Heart right ventricle (tissue), 16 donors: ENCODE measurements at regions of chr1 and their contacts with region 1.

Region 1: DNA sequence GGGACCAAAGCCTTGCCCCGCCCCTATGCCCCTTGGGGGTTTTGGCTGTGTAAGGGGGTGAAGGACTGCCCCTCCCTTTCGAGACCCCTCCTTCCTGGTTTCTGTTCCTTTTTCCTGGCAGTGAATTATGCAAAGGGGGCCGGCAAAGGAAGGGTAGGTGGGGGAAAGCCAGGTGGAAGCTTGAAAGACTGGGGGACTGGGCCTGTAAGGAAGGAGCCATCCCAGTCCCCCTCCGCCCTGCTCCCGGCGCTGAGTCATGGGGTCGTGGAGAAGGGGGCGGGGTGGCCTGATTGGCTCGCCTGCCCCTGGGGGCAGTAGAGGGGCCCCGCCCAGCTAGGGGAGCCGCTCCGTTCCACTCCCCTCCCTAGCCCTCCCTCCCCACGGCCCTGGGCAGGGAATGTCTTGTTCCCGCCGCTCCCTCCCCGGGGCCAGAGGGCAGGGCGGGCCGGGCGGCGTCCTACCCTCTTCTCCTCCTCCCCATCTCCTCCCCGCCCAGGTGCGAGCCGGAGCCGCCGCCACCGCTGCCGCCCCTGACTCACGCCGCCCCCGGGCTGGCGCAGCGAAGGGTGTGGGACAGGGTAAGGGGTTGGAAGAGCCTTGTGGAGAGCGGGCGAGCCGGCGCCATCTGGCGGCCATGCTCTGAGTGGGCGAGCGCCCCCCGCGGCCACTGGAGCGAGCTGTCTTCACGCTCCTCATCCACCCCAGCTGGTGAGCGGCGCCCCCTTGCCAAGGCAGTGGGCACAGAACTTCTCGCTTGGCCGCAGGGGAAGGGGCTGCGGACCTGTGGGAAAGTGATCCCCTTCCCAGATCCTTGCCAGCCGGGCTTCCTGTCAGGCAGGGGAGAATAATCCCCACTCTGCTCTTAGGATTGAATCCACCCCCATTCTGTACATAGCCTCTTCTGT is 14.7 kb downstream of the ZBTB7B start:
- DNase-seq: peak; percentile 88 to 89
- ATAC-seq: peak; percentile 88 to 95 (median 92)
- H3K4me3 ChIP-seq: peak overlapping the region in 9 of 10 donors; percentile 31 to 64 (median 57)
- H3K27ac ChIP-seq: peak overlapping the region; percentile 78 to 91 (median 85)
- H3K4me1 ChIP-seq: peaks cover 12 to 55% (median 27%) of the 10 kb centered on the region in 9 donors
- H3K27me3 ChIP-seq: no peaks in the 10 kb centered on the region
- CTCF ChIP-seq: peak; percentile 97 to 100 (median 98)

Region 2: DNA sequence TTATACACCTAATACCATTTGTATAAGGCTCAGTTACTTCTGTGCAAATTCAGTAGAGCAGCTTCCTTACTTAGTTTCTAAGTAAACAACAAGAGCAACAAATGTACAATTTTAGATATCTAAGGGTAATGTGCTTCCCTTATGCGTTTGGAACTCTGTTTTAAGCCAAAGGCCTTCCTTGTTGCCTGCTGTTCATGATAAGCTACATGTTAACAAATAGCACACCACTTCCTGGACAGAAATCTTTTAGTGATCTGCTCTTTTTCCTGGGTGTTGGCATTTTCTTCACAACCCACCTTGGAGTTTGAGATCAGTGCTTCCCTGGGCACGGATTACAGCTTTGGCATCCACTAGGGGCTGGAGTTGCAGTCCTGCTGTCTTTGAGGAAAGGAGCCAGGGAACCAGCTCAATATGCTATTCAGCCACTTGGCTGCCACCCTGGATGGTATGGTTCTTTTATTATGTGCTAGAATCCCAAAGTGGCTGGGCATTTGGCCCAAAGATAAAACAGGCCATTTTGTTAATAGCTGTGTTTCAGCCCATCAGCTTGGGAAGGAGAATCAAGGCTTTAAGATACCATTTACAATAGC is 353.7 kb before region 1 on chr1:
- intact Hi-C with region 1: no loop called
- DNase-seq: no peak
- ATAC-seq: no peak
- H3K4me3 ChIP-seq: no peak overlapping the region
- H3K27ac ChIP-seq: no peak overlapping the region
- H3K4me1 ChIP-seq: peaks cover 0 to 7% (median 0%) of the 10 kb centered on the region in 9 donors
- H3K27me3 ChIP-seq: peaks cover 0 to 13% (median 3%) of the 10 kb centered on the region in 7 donors
- CTCF ChIP-seq: no peak

Region 3: GRCh38 chr1:154837672-154838171 is 179.6 kb before region 1 on chr1:
- intact Hi-C with region 1: no loop called
- DNase-seq: peak; percentile 67 to 69
- ATAC-seq: peak; percentile 63 to 91 (median 81)
- H3K4me3 ChIP-seq: no peak overlapping the region
- H3K27ac ChIP-seq: peak overlapping the region in 4 of 10 donors; percentile 8 to 49 (median 34)
- H3K4me1 ChIP-seq: peaks cover 20 to 70% (median 34%) of the 10 kb centered on the region in 9 donors
- H3K27me3 ChIP-seq: no peaks in the 10 kb centered on the region
- CTCF ChIP-seq: no peak

Region 4: GRCh38 chr1:154870115-154870571 is 147.2 kb before region 1 on chr1 and contains the start of gene KCNN3:
- intact Hi-C with region 1: no loop called
- DNase-seq: peak; percentile 93
- ATAC-seq: peak; percentile 96 to 98 (median 98)
- H3K4me3 ChIP-seq: peak within 1 kb of the TSS; percentile 11 to 66 (median 56)
- H3K27ac ChIP-seq: peak within 1 kb of the TSS in 8 of 10 donors; percentile 23 to 68 (median 40)
- H3K4me1 ChIP-seq: peaks cover 8 to 47% (median 38%) of the 10 kb centered on the region in 9 donors
- H3K27me3 ChIP-seq: peaks cover 0 to 26% (median 0%) of the 10 kb centered on the region in 7 donors
- CTCF ChIP-seq: no peak
- total RNA-seq, gene KCNN3: 0.52 to 5.9 (median 2.7) TPM

Region 5: GRCh38 chr1:154955718-154956543 is 61.4 kb before region 1 on chr1 and contains the start of gene PBXIP1:
- intact Hi-C with region 1: loop called in 4 of 10 experiments (anchors 2 to 10 kb)
- DNase-seq: peak in 1 of 2 donors; percentile 91
- ATAC-seq: peak; percentile 70 to 94 (median 88)
- H3K4me3 ChIP-seq: peak within 1 kb of the TSS; percentile 26 to 74 (median 60)
- H3K27ac ChIP-seq: peak within 1 kb of the TSS in 9 of 10 donors; percentile 69 to 84 (median 80)
- H3K4me1 ChIP-seq: peaks cover 15 to 68% (median 57%) of the 10 kb centered on the region in 9 donors
- H3K27me3 ChIP-seq: no peaks in the 10 kb centered on the region
- CTCF ChIP-seq: peak in 5 of 9 donors; percentile 21 to 47 (median 34)
- total RNA-seq, gene PBXIP1: 38.3 to 75.0 (median 48.8) TPM

Region 6: DNA sequence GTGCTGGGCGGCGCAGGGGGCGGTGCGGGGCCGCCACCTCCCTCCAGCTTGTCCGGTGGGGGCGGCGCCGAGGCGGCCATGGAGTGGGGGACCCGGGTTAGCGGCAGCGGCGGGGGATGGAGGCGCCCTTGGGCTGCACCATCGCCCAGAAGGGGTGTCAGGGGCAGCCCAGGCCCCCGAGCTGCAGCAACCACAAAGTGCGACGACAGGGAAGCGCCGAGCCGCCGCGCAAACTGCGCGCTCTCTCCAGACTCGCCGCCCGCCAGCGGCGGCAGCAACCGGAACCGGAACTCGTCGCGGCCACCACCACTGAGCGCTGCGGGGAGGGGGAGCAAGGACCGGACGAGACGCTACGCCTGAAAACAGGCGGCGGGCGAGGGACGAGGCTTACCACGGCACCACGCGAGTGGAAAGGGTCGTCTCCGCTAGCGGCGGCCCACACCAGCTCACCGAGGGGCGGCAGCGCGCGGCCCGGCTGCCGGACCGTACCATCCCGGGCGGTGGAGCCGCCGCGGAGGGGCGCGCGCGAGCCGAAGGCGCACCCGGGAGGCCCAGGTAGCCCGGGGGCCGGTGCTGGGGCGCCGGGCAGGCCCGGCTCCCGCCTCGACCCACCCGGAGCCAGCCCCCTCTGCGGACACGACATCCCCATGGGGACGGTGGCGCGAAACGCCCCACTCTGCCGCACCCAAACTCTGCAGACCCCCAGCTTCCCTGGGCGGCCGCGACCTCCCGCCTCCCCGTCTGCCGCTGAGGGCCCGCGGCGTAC is 55.6 kb before region 1 on chr1 and contains the start of gene PYGO2:
- intact Hi-C with region 1: loop called in 5 of 10 experiments (anchors 2 to 10 kb)
- DNase-seq: peak; percentile 83 to 84
- ATAC-seq: peak; percentile 84 to 90 (median 86)
- H3K4me3 ChIP-seq: peak within 1 kb of the TSS; percentile 81 to 99 (median 90)
- H3K27ac ChIP-seq: peak within 1 kb of the TSS; percentile 96 to 100 (median 99)
- H3K4me1 ChIP-seq: peaks cover 12 to 49% (median 33%) of the 10 kb centered on the region in 9 donors
- H3K27me3 ChIP-seq: no peaks in the 10 kb centered on the region
- CTCF ChIP-seq: peak; percentile 41 to 80 (median 62)
- total RNA-seq, gene PYGO2: 8.8 to 18.0 (median 13.9) TPM

Region 7: DNA sequence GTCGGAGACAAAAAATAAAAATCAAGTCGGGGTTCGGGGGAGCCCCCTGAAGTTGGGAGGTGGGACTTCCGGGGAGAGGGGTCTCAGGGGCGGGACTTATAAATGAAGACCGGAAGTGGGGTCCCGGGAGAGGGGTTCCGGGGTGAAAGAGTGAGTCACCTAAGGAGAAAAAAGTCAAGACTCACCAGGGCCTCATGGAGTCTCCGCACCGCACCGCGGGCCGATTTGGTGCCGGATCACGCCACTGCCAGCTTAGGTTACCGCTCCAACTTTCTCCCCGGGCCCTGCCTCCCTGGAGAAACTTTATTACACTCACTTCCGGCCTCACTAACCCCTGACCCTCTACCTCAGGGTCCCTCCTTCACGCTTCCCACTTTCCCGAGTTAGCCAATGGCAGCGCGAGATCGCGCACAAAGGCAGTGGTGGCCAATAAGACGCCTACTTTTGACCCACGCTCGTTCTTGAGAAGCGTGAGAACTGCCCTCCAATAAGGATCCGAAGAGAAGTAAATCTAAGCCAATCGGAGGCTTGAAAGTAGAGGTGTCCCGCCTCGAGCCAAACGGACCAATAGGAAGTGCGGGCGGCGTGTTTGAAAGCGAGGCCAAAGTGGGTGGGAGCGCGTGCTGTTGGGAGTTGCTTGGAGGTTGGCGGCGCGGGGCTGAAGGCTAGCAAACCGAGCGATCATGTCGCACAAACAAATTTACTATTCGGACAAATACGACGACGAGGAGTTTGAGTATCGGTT is 43.1 kb before region 1 on chr1 and contains the start of gene CKS1B:
- intact Hi-C with region 1: loop called in 2 of 10 experiments (anchors 5 kb)
- DNase-seq: peak; percentile 95 to 98
- ATAC-seq: peak; percentile 82 to 92 (median 89)
- H3K4me3 ChIP-seq: peak within 1 kb of the TSS; percentile 41 to 89 (median 66)
- H3K27ac ChIP-seq: peak within 1 kb of the TSS; percentile 90 to 100 (median 96)
- H3K4me1 ChIP-seq: peaks cover 25 to 64% (median 50%) of the 10 kb centered on the region in 9 donors
- H3K27me3 ChIP-seq: no peaks in the 10 kb centered on the region
- CTCF ChIP-seq: peak in 1 of 9 donors; percentile 18
- total RNA-seq, gene CKS1B: 10.9 to 30.9 (median 17.5) TPM

Region 8: DNA sequence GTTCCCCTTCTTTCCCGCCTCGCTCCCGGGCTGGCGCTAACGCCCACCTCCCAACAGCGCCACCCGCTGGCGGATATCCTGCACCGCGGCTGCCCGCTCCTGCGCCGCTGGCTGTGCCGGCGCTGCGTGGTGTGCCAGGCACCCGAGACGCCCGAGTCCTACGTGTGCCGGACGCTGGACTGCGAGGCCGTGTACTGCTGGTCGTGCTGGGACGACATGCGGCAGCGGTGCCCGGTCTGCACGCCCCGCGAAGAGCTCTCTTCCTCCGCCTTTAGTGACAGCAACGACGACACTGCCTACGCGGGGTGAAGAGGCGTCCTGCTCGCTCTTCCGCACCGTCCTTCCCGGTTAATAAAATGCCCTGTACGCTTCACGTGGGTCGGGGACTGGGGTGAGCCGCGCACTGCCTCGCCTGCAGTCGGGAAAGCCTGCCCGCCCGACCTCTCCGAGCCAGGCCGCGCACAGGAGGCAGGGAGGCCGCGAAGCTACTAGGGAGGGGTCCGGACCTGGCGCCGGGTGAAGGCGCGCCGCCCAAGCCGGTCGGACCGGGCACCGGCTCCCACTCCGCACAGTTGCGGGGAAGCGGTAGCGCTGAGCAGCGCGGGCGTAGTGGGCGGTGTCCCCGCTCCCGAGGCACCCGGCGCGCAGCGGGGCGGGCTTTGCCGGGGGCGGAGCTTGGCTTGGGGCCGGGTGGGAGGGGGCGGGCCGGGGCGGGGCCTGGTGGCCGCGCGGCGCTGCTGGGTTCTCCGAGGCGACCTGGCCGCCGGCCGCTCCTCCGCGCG is 33.5 kb after region 1 on chr1 and contains the start of gene ADAM15:
- intact Hi-C with region 1: loop called in 1 of 10 experiments (anchors 5 kb)
- DNase-seq: peak; percentile 82 to 88
- ATAC-seq: peak; percentile 73 to 91 (median 82)
- H3K4me3 ChIP-seq: peak within 1 kb of the TSS; percentile 51 to 98 (median 84)
- H3K27ac ChIP-seq: peak within 1 kb of the TSS; percentile 53 to 98 (median 94)
- H3K4me1 ChIP-seq: peaks cover 12 to 45% (median 27%) of the 10 kb centered on the region in 9 donors
- H3K27me3 ChIP-seq: no peaks in the 10 kb centered on the region
- CTCF ChIP-seq: peak; percentile 85 to 96 (median 92)
- total RNA-seq, gene ADAM15: 46.7 to 146 (median 58.5) TPM

Region 9: DNA sequence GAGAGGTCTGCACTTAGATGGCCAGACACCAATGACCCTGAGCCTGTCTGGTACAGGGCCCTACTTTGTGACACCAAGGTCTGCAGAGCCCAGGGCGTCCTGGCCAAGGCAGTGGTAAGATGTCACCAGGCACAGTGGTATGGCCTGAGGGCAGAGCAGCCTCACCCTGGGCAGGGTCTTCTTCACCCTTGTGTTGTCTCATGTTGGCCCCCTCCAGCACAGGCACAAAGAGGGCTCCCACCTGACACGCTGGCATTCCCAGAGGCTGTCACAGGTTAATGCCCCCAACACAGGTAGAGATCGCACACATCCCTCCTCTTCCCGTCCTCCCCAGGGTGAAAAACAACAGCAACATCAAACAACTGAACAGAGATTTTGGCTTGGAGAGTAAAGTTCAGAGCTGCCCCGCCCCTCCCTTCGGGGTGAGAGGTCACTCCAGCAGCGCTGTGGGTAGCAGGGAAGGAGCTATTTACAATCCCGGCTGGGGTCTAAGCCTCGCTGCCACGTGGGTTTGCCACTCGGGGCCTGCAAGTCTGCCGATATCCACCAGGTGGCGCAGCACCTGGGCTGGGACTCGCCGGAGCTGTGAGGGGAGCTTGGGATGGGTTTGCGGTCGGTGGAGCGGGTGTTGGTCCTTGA is 73.9 kb after region 1 on chr1:
- intact Hi-C with region 1: no loop called
- DNase-seq: peak; percentile 79 to 84
- ATAC-seq: peak; percentile 37 to 74 (median 62)
- H3K4me3 ChIP-seq: no peak overlapping the region
- H3K27ac ChIP-seq: no peak overlapping the region
- H3K4me1 ChIP-seq: peaks cover 0 to 33% (median 22%) of the 10 kb centered on the region in 9 donors
- H3K27me3 ChIP-seq: no peaks in the 10 kb centered on the region
- CTCF ChIP-seq: peak; percentile 94 to 99 (median 99)